G401 (cell line): ENCODE measurements at regions of chr7 and their contacts with region 1.

Region 1: DNA sequence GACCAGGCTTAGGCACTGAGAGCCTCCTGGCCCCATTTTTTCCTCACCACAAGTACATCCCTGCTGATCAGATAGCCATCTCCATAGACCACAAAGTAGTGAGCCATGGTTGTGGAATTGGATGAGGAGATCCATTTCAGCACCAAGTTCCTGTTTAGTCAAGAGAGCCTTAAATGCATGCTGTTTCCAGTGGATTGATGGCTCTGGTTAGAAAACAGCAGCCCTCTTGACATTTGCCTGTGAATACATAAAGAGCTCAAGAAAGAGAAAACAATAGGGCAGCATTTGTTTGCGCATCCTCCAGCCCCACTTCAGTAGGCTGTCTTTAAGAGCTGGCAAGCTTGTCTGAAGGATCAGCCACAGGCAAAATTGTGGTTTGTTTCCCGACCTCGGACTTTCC is 251.2 kb downstream of the POU6F2 start:
- DNase-seq: no peak

Region 2: GRCh38 chr7:38932509-38933168 is 296.3 kb before region 1 on chr7:
- in situ Hi-C with region 1: loop called (anchors 25 kb)
- DNase-seq: peak; percentile 30

Region 3: DNA sequence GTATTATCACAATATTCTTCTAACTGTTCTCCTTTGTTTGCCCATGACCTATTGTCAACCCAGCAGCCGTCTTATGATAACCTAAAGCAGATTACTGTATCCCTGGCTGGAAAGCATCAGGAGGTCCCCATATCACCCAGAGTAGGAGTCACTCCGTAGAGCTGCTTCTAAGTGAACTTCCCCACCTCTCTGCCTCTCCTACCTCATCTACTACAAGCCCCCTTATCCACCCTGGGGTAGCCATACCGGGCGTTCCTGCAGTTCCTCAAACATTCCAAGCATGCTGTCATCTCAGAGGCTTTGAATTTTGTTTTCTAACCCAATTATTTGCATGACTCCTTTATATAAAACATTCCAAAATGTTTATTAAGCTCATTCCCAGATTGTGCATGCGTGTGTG is 211.5 kb before region 1 on chr7:
- in situ Hi-C with region 1: no loop called
- DNase-seq: no peak